Heart right ventricle (tissue), 16 donors: ENCODE measurements at regions of chr1 and their contacts with region 1.

Region 1: GRCh38 chr1:85576642-85577418 is 3.7 kb upstream of the CCN1 start:
- DNase-seq: peak; percentile 87 to 92
- ATAC-seq: peak; percentile 46 to 78 (median 62)
- H3K4me3 ChIP-seq: peak overlapping the region; percentile 57 to 89 (median 74)
- H3K27ac ChIP-seq: peak overlapping the region; percentile 93 to 100 (median 98)
- H3K4me1 ChIP-seq: peaks cover 0 to 54% (median 40%) of the 10 kb centered on the region in 9 donors
- H3K27me3 ChIP-seq: peaks cover 0 to 63% (median 0%) of the 10 kb centered on the region in 7 donors
- CTCF ChIP-seq: peak; percentile 72 to 91 (median 83)

Region 2: GRCh38 chr1:85276215-85276977 is 300.4 kb before region 1 on chr1 and contains the start of gene BCL10:
- intact Hi-C with region 1: loop called in 1 of 10 experiments (anchors 5 kb)
- DNase-seq: peak; percentile 97 to 99
- ATAC-seq: peak; percentile 98 to 100 (median 99)
- H3K4me3 ChIP-seq: peak within 1 kb of the TSS; percentile 68 to 98 (median 90)
- H3K27ac ChIP-seq: peak within 1 kb of the TSS; percentile 82 to 99 (median 96)
- H3K4me1 ChIP-seq: peaks cover 12 to 67% (median 36%) of the 10 kb centered on the region in 9 donors
- H3K27me3 ChIP-seq: no peaks in the 10 kb centered on the region
- CTCF ChIP-seq: no peak
- total RNA-seq, gene BCL10: 6.2 to 15.3 (median 9.4) TPM

Region 3: GRCh38 chr1:85330711-85331290 is 246.0 kb before region 1 on chr1:
- intact Hi-C with region 1: loop called in 1 of 10 experiments (anchors 10 kb)
- DNase-seq: peak in 1 of 2 donors; percentile 82
- ATAC-seq: peak; percentile 63 to 88 (median 85)
- H3K4me3 ChIP-seq: no peak overlapping the region
- H3K27ac ChIP-seq: peak overlapping the region; percentile 50 to 91 (median 78)
- H3K4me1 ChIP-seq: peaks cover 11 to 41% (median 31%) of the 10 kb centered on the region in 9 donors
- H3K27me3 ChIP-seq: no peaks in the 10 kb centered on the region
- CTCF ChIP-seq: no peak

Region 4: GRCh38 chr1:85494904-85495266 is 81.9 kb before region 1 on chr1:
- intact Hi-C with region 1: loop called in 3 of 10 experiments (anchors 5 to 10 kb)
- DNase-seq: peak in 1 of 2 donors; percentile 7
- ATAC-seq: peak in 2 of 8 donors; percentile 53 to 55
- H3K4me3 ChIP-seq: no peak overlapping the region
- H3K27ac ChIP-seq: no peak overlapping the region
- H3K4me1 ChIP-seq: no peaks in the 10 kb centered on the region
- H3K27me3 ChIP-seq: no peaks in the 10 kb centered on the region
- CTCF ChIP-seq: peak in 7 of 9 donors; percentile 18 to 54 (median 47)

Region 5: GRCh38 chr1:85599076-85599491 is 22.3 kb after region 1 on chr1:
- intact Hi-C with region 1: no loop called
- DNase-seq: no peak
- ATAC-seq: no peak
- H3K4me3 ChIP-seq: no peak overlapping the region
- H3K27ac ChIP-seq: no peak overlapping the region
- H3K4me1 ChIP-seq: no peaks in the 10 kb centered on the region
- H3K27me3 ChIP-seq: no peaks in the 10 kb centered on the region
- CTCF ChIP-seq: no peak

Region 6: DNA sequence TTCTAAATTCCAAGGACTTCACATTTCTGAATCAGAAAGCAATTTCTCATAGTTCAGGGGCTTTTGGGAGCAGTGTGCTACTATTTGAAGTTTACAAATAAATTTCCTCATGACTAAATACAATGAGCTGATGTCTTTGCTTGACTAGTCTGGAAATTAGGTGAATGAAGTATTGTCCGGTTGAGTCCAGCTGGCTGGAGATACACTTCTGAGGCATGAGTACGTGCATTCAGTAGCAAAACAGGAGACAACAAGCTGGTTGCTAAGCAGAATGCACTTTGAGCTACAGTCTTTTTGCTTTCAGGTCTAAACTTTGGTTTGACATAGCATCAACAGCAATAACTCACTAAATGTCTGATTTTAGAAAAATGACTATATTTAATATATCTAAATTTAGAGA is 104.3 kb after region 1 on chr1:
- intact Hi-C with region 1: loop called in 3 of 10 experiments (anchors 5 to 10 kb)
- DNase-seq: peak in 1 of 2 donors; percentile 16
- ATAC-seq: peak in 5 of 8 donors; percentile 54 to 90 (median 81)
- H3K4me3 ChIP-seq: no peak overlapping the region
- H3K27ac ChIP-seq: peak overlapping the region in 2 of 10 donors; percentile 3 to 25
- H3K4me1 ChIP-seq: peaks cover 0 to 16% (median 8%) of the 10 kb centered on the region in 9 donors
- H3K27me3 ChIP-seq: no peaks in the 10 kb centered on the region
- CTCF ChIP-seq: no peak

Region 7: GRCh38 chr1:85707990-85708828 is 131.4 kb after region 1 on chr1 and contains the start of gene ZNHIT6:
- intact Hi-C with region 1: loop called in 1 of 10 experiments (anchors 2 kb)
- DNase-seq: peak; percentile 83 to 92
- ATAC-seq: peak; percentile 88 to 98 (median 97)
- H3K4me3 ChIP-seq: peak within 1 kb of the TSS; percentile 62 to 91 (median 77)
- H3K27ac ChIP-seq: peak within 1 kb of the TSS; percentile 73 to 98 (median 90)
- H3K4me1 ChIP-seq: peaks cover 0 to 26% (median 16%) of the 10 kb centered on the region in 9 donors
- H3K27me3 ChIP-seq: no peaks in the 10 kb centered on the region
- CTCF ChIP-seq: peak in 7 of 9 donors; percentile 18 to 47 (median 44)
- total RNA-seq, gene ZNHIT6: 8.7 to 12.8 (median 10.5) TPM